Left ventricle myocardium superior (tissue), 1 donor: ENCODE measurements at regions of chr10 and their contacts with region 1.

Region 1: GRCh38 chr10:69004821-69005220 is 16.2 kb downstream of the KIFBP start:
- DNase-seq: no peak
- ATAC-seq: peak; percentile 31

Region 2: GRCh38 chr10:69092959-69093850 is 88.4 kb after region 1 on chr10:
- intact Hi-C with region 1: loop called (anchors 5 kb)
- DNase-seq: peak; percentile 44
- ATAC-seq: peak; percentile 87